Mammary epithelial cell (primary cell): ENCODE measurements at regions of chr6 and their contacts with region 1.

Region 1: GRCh38 chr6:26568601-26569432 is 27.9 kb upstream of the ABT1 start:
- DNase-seq: peak; percentile 85
- H3K4me3 ChIP-seq: peak overlapping the region; percentile 62 to 73 (median 71)
- H3K27ac ChIP-seq: no peak overlapping the region
- H3K4me1 ChIP-seq: no peaks in the 10 kb centered on the region
- H3K27me3 ChIP-seq: no peaks in the 10 kb centered on the region
- CTCF ChIP-seq: peak in 1 of 2 donors; percentile 27

Region 2: DNA sequence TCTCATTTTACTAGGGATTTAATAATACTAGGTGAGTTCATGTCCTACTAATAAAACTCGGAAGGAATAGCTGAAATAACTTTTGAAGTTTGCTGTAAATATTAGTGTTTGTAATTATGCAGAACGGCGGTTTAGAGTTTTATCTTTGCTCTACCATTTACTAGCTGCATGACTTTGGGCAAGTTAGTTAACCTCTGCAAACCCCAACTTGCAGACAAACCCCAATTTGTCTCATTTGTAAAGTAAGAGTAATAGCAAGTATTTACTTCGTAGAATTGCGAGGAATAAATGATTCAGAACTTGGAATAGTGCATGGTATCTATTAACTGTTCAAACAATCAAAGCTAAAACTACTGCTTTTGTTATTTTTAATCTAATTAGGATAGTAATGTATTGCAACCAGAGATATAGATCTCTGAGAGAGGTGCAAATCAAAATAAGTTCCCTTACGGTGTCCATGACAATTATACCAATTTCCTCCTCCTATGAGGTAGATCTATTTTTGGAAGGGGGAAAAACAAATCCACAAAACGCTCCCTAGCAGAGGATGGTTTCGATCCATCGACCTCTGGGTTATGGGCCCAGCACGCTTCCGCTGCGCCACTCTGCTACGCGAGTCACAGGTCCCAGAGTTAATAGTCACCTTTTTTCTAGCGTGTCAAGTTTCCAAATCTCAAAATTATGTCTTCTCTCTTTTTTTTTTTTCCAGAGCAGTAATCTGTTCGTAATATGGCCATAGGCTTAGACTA is 238.9 kb before region 1 on chr6:
- CTCF ChIA-PET with region 1: interaction called, 3 read pairs
- dilution Hi-C with region 1: no loop called
- in situ Hi-C with region 1: loop called in 1 of 2 experiments (anchors 10 kb)
- intact Hi-C with region 1: loop called (anchors 1 kb)
- DNase-seq: peak; percentile 51
- H3K4me3 ChIP-seq: peak overlapping the region; percentile 56 to 98 (median 86)
- H3K27ac ChIP-seq: no peak overlapping the region
- H3K4me1 ChIP-seq: peaks cover 13% of the 10 kb centered on the region
- H3K27me3 ChIP-seq: no peaks in the 10 kb centered on the region
- CTCF ChIP-seq: no peak

Region 3: GRCh38 chr6:26662642-26663041 is 93.8 kb after region 1 on chr6:
- CTCF ChIA-PET with region 1: no interaction called
- dilution Hi-C with region 1: no loop called
- in situ Hi-C with region 1: no loop called
- intact Hi-C with region 1: no loop called
- DNase-seq: no peak
- H3K4me3 ChIP-seq: no peak overlapping the region
- H3K27ac ChIP-seq: no peak overlapping the region
- H3K4me1 ChIP-seq: peaks cover 10% of the 10 kb centered on the region
- H3K27me3 ChIP-seq: peaks cover 5% of the 10 kb centered on the region
- CTCF ChIP-seq: no peak